Left cardiac atrium (tissue), 4 donors: ENCODE measurements at regions of chr7 and their contacts with region 1.

Region 1: GRCh38 chr7:148242294-148242801 is 348.2 kb upstream of the C7orf33 start:
- DNase-seq: no peak
- ATAC-seq: peak; percentile 88 to 92

Region 2: DNA sequence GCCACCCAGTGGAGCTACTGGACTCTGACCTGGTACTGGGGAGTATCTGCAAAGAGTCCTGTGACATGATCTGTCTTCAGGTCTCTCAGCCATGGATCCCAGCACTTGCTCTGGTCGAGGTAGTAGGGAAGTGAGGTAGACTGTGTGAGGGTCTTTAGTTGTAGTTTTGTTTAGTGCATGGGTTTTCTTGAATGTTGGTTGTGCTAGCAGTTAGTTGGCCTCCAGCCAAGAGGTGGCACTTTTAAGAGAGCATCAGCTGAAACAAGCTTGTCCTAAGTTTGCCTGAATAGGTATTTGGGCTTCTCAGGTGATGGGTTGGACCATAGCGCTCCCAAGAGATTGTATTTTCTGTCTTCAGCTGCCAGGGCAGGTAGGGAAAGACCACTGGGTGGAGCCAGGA is 175.0 kb before region 1 on chr7:
- intact Hi-C with region 1: no loop called
- DNase-seq: no peak
- ATAC-seq: no peak

Region 3: DNA sequence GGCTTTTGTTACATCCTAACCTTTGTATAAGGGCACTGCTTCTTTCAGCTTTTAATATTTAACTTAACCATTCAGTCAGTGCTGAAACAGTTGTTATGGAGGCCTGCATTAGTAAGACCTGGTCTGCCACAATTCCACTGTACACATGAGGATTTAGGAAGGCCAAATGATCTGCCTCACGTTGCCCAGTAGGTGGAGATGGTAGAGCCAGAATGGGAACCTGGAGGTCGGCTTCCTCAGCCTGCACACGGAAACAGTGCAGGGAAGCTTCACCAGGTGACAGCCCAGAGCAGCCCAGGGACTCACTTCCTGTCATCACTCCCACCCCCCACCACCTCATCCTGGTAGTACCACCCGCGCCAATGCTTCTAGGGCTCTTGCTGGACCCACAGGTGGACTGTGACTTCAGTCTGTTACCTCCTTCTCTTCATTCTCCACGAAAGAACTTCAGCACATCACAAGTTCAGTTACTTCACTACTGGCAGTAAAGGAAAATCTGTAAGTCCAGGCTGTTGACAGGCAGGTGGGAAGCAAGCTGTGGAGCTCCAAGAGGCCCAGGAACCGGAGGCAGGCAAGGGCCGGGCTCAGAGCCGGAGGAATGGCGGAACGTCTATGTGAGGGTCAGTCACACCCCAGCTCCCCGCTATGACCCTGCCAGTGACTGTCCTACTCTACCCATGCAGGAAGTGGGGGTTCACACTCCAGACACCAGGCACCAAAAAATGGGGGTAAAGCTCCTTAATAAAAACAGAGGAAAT is 132.1 kb before region 1 on chr7:
- intact Hi-C with region 1: loop called (anchors 1 to 10 kb)
- DNase-seq: no peak
- ATAC-seq: peak; percentile 41 to 56

Region 4: DNA sequence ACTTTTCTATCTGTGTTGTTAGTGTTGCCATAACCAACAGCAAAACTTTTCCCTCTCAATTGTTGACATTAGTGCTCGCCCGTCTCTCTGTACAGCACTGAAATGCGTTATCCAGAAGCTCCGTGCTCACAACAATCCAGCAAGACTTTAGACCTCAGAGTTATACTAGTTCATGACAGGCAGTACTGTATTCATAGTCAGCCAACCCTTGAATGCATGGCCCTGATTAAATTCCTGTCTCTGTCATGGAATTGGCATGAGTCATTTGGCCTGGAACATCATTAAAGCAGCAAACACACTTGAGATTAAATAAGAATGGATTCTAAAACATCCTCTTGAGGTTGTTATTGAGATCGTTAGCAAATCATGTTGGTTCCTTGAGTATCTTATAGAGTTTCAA is 57.3 kb before region 1 on chr7:
- intact Hi-C with region 1: loop called in 1 of 2 experiments (anchors 2 kb)
- DNase-seq: no peak
- ATAC-seq: peak; percentile 34 to 89

Region 5: DNA sequence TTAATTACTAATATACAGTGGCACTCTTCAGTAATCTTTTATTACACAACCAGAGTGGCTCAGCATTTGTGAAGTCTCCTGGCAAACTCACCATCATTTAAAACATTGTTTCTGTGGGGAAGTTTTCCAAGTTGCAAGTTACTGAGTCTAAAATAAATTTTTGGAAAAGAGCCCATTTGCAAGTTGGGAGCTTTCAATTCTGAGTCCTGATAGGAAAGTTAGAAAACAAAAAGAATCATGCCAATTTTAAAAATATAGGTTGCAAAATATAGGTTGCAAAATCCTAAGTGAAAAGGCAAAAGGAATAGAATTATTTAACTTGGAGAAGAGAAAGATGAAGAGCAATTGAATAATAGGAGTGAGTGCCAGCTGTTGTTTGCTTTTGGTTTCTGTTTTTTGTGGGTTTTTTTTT is 30.6 kb before region 1 on chr7:
- intact Hi-C with region 1: no loop called
- DNase-seq: no peak
- ATAC-seq: peak; percentile 35 to 47

Region 6: GRCh38 chr7:148395990-148396716 is 153.8 kb after region 1 on chr7:
- intact Hi-C with region 1: no loop called
- DNase-seq: no peak
- ATAC-seq: no peak